Naive thymus-derived CD4-positive, alpha-beta T cell (primary cell): ENCODE measurements at regions of chr3 and their contacts with region 1.

Region 1: DNA sequence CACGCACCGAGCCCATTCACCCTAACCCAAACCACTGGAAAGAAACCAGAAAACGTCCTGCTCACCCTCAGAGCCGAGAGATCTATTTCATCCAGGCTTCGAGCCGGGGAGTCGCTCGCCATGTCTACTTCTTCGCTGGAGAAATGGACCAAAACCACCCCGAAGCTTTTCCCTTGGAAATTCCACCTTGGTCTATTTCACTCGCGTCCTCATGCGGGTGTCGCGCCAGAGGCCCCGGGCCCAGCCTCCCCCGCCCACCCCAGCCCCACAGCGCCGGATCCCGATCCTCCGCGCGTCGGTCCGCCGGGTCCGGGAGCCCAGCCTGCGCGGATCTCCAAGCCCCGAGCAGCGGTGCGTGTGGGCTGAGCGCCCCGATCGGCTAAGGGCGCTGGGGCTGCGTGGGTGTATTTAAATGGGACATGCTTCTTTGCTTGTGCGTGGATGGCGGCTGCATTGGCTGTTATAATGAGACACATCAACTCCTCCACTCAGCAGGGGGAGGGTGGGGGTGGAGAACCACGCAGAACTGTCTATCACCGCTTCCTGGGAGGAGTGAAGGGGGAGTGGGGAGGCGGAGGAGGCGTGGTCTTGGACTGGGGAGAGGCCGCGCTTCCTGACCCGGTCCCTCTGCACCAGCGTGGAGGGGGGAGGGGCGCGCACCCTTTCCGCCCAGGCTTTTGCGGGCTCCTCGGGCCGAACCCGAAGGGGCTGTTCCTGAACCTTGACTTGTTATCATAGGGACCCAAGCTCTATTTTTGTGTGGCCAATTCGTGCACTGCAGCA is at the start of gene TNIK:
- DNase-seq: peak; percentile 73 to 99 (median 91)
- ATAC-seq: peak; percentile 92
- H3K4me3 ChIP-seq: peak within 1 kb of the TSS; percentile 87
- H3K4me3 Mint-ChIP-seq: peak within 1 kb of the TSS; percentile 91 to 98 (median 94)
- H3K27ac ChIP-seq: peak within 1 kb of the TSS; percentile 81
- H3K27ac Mint-ChIP-seq: peak within 1 kb of the TSS; percentile 88 to 96 (median 91)
- H3K4me1 ChIP-seq: peaks cover 15 to 29% of the 10 kb centered on the region in 2 donors
- H3K4me1 Mint-ChIP-seq: peaks cover 19 to 46% (median 45%) of the 10 kb centered on the region in 7 donors
- H3K27me3 ChIP-seq: no peaks in the 10 kb centered on the region
- H3K27me3 Mint-ChIP-seq: no peaks in the 10 kb centered on the region
- total RNA-seq, gene TNIK: 61.6 to 74.9 (median 73.6) TPM

Region 2: DNA sequence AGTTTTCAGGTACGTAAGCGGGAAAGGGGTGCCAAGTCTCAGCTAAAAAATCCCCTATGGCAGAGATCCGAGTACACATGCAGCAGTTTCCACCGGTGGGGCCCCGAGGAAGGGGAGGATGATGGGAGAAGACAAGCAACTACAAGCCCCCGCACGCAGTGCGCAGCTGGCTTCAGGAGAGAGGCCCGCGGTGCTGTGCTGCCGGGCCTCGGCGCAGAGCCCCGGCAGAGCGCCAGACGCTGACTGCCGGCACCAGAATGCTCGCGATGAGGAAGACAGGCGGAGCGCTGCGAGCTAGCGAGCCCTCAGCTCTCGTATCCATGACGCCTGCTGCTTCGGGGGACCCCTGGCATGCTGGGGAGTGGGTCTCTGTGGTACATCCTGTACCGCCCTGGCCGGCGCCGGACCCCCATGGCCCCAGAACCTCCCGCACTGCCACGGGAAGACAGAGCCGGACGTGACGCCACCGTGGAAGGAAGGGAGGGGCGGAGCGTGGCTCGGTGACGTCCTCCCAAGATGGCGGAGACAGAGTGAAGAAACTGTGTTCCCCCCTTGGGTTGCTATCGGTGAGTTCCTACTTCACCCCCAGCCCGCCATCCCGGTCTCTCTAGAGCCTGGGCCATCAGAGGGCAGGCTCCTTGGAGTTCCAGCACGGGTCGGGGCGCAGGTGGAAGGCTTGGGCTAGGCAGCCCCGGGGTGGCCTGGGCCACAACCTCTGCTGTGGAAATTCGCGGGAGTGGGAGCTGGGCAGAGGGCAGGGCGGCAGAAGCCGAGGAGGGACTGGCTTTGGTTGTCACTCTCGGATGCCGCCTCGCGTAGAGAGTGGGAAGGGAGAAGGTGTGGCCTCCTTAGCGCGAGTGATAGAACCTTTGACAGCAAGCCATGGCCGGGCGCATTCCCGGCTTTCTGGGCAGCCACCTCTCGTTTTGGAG is 1687.0 kb before region 1 on chr3 and contains the start of gene MYNN:
- CTCF ChIA-PET with region 1: no interaction called
- POLR2A ChIA-PET with region 1: no interaction called
- intact Hi-C with region 1: loop called in 1 of 2 experiments (anchors 1 kb)
- DNase-seq: peak; percentile 87 to 95 (median 93)
- ATAC-seq: peak; percentile 90
- H3K4me3 ChIP-seq: peak within 1 kb of the TSS; percentile 87
- H3K4me3 Mint-ChIP-seq: peak within 1 kb of the TSS; percentile 91 to 99 (median 97)
- H3K27ac ChIP-seq: peak within 1 kb of the TSS; percentile 100
- H3K27ac Mint-ChIP-seq: peak within 1 kb of the TSS; percentile 96 to 100 (median 99)
- H3K4me1 ChIP-seq: peaks cover 15 to 22% of the 10 kb centered on the region in 2 donors
- H3K4me1 Mint-ChIP-seq: peaks cover 18 to 69% (median 56%) of the 10 kb centered on the region in 7 donors
- H3K27me3 ChIP-seq: no peaks in the 10 kb centered on the region
- H3K27me3 Mint-ChIP-seq: peaks cover 0 to 5% (median 0%) of the 10 kb centered on the region in 5 donors
- total RNA-seq, gene MYNN: 16.2 to 20.8 (median 19.0) TPM

Region 3: DNA sequence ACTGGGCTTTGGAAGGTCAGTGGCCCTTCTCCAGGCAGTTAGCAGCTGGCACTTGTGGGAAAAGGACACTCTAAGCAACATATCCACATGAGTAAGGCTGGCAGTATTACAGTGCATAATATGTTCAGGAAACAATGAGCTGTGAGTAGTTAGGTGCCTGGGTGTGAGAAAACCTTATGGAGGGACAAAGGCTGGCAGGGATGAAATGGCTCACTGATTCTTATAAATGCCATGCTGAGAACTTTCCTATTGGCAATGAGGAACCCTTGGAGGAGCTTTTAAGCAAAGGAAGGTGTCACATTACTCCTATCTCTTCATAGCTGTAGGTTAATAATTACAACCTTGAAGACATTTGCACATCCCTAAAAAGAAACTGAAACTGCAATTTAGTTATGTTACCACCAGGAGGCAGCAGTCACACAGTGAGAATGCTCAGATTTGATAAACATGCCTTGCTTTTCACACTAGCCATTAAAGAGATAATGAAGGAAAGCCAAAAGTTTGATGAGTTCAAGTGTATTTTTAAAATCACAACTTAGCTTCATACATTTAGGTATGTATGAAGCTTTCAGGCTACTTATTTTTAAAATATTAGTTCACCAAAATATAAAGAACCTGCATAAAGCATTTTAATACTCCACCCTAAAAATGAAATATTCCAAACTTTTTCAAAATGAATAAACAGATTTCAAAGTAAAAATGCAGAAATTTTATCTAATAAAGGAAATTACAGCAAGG is 297.0 kb before region 1 on chr3:
- CTCF ChIA-PET with region 1: no interaction called
- POLR2A ChIA-PET with region 1: interaction called, 3 read pairs
- intact Hi-C with region 1: loop called (anchors 1 kb)
- DNase-seq: peak in 7 of 9 donors; percentile 19 to 51 (median 47)
- ATAC-seq: peak; percentile 55
- H3K4me3 ChIP-seq: no peak overlapping the region
- H3K4me3 Mint-ChIP-seq: no peak overlapping the region
- H3K27ac ChIP-seq: no peak overlapping the region
- H3K27ac Mint-ChIP-seq: peak overlapping the region in 1 of 9 donors; percentile 56
- H3K4me1 ChIP-seq: no peaks in the 10 kb centered on the region
- H3K4me1 Mint-ChIP-seq: peaks cover 9 to 25% (median 19%) of the 10 kb centered on the region in 7 donors
- H3K27me3 ChIP-seq: no peaks in the 10 kb centered on the region
- H3K27me3 Mint-ChIP-seq: no peaks in the 10 kb centered on the region

Region 4: GRCh38 chr3:171284308-171285075 is 175.6 kb before region 1 on chr3:
- CTCF ChIA-PET with region 1: no interaction called
- POLR2A ChIA-PET with region 1: no interaction called
- intact Hi-C with region 1: loop called in 1 of 2 experiments (anchors 2 kb)
- DNase-seq: no peak
- ATAC-seq: no peak
- H3K4me3 ChIP-seq: no peak overlapping the region
- H3K4me3 Mint-ChIP-seq: peak overlapping the region in 7 of 10 donors; percentile 1 to 65 (median 5)
- H3K27ac ChIP-seq: no peak overlapping the region
- H3K27ac Mint-ChIP-seq: peak overlapping the region in 4 of 9 donors; percentile 28 to 69 (median 46)
- H3K4me1 ChIP-seq: peaks cover 13 to 32% of the 10 kb centered on the region in 2 donors
- H3K4me1 Mint-ChIP-seq: peaks cover 27 to 82% (median 71%) of the 10 kb centered on the region in 7 donors
- H3K27me3 ChIP-seq: no peaks in the 10 kb centered on the region
- H3K27me3 Mint-ChIP-seq: no peaks in the 10 kb centered on the region

Region 5: DNA sequence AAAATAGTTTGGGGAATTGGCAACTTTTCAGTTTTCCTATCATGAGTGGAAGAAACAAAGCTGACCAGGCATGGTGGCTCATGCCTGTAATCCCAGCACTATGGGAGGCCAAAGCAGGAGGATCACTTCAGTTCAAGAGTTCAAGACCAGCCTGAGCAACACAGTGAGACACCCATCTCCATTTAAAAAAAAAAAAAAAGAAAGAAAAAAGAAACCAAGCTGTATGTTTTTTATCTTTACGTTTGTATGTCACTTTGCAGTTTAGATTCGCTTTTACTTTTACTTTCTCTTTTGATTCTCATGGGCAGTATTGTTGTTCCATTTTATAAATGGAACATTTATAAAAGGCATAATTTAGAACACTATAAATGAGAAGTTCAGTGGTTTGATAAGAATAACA is 31.2 kb after region 1 on chr3:
- CTCF ChIA-PET with region 1: interaction called, 4 read pairs
- POLR2A ChIA-PET with region 1: interaction called, 29 read pairs
- intact Hi-C with region 1: loop called (anchors 1 kb)
- DNase-seq: peak in 6 of 9 donors; percentile 14 to 57 (median 36)
- ATAC-seq: peak; percentile 26
- H3K4me3 ChIP-seq: peak overlapping the region; percentile 10
- H3K4me3 Mint-ChIP-seq: peak overlapping the region; percentile 36 to 82 (median 74)
- H3K27ac ChIP-seq: no peak overlapping the region
- H3K27ac Mint-ChIP-seq: peak overlapping the region; percentile 79 to 90 (median 85)
- H3K4me1 ChIP-seq: peaks cover 32 to 38% of the 10 kb centered on the region in 2 donors
- H3K4me1 Mint-ChIP-seq: peaks cover 15 to 55% (median 48%) of the 10 kb centered on the region in 7 donors
- H3K27me3 ChIP-seq: no peaks in the 10 kb centered on the region
- H3K27me3 Mint-ChIP-seq: no peaks in the 10 kb centered on the region

Region 6: GRCh38 chr3:172106989-172107388 is 646.9 kb after region 1 on chr3:
- CTCF ChIA-PET with region 1: no interaction called
- POLR2A ChIA-PET with region 1: no interaction called
- intact Hi-C with region 1: loop called (anchors 10 kb)
- DNase-seq: peak in 8 of 9 donors; percentile 57 to 89 (median 84)
- ATAC-seq: peak; percentile 80
- H3K4me3 ChIP-seq: peak overlapping the region; percentile 45
- H3K4me3 Mint-ChIP-seq: peak overlapping the region; percentile 78 to 89 (median 84)
- H3K27ac ChIP-seq: peak overlapping the region; percentile 54
- H3K27ac Mint-ChIP-seq: peak overlapping the region; percentile 88 to 94 (median 91)
- H3K4me1 ChIP-seq: peaks cover 44 to 73% of the 10 kb centered on the region in 2 donors
- H3K4me1 Mint-ChIP-seq: peaks cover 65 to 91% (median 82%) of the 10 kb centered on the region in 7 donors
- H3K27me3 ChIP-seq: no peaks in the 10 kb centered on the region
- H3K27me3 Mint-ChIP-seq: peaks cover 0 to 8% (median 0%) of the 10 kb centered on the region in 5 donors